AG04449 (cell line): ENCODE measurements at regions of chr22 and their contacts with region 1.

Region 1: GRCh38 chr22:35430897-35431322 is 31.0 kb downstream of the MCM5 start:
- DNase-seq: peak; percentile 68
- H3K4me3 ChIP-seq: no peak overlapping the region
- CTCF ChIP-seq: peak; percentile 93

Region 2: DNA sequence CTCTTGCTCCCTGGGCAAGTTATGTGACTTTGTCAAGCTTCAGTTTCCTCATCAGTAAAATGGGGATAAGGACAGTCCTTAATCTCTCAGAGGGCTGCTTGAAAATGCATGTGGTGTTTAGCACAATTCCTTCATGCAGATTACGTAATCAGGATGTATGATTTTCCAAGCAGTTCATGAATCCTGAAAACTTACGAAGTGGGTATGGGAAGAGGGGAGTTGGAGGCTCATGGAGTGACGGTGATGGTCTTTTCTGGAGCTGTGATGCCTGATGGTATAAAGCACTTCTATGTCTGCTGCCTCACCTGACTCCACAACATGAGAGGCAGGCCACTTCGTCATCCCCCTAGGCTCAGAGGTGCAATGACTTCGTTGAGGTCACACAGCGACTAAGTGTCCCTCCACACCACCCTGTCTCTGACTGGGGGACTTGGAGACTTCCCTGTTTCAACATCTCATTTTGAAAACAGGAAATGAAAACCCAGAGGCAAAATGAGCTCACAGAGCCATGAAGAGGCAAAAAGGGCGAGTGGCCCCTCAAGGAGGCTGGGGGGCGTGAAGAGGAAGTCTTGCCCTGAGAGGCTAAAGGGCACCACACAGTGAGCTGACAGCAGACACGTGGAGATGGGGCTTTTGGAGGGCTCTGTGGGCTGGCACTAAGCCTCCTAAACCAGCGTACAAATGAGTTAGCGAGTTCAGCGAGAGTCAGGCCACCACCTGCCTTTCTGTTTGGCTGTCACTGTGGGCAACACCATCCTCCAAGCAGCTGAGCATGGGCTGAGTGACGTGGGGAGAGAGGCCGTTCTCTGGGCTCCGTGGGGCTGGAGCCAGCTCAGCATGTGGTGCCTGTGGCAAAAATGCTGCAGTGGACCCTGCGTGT is 20.9 kb before region 1 on chr22:
- CTCF ChIA-PET with region 1: interaction called, 19 read pairs
- POLR2A ChIA-PET with region 1: no interaction called
- DNase-seq: no peak
- H3K4me3 ChIP-seq: no peak overlapping the region
- CTCF ChIP-seq: no peak

Region 3: DNA sequence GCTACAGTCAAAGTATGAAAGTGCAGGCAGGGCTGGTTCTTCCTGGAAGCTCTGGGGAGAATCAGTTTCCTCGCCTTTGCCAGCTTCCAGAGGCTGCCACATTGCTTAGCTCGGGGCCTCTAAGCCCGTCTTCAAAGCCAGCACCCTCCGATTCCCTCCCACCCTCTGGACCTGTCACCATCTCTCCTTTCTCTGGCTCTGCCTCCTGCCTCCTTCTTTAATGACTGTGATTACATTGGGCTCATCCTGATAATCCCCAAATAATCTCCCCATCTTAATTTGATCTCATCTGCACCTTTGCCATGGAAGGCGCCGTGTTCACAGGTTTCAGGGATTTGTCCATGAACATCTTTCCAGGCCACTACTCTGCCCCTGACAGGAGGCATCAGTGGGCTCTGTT is 11.6 kb after region 1 on chr22:
- CTCF ChIA-PET with region 1: interaction called, 10 read pairs
- POLR2A ChIA-PET with region 1: no interaction called
- DNase-seq: no peak
- H3K4me3 ChIP-seq: no peak overlapping the region
- CTCF ChIP-seq: no peak

Region 4: DNA sequence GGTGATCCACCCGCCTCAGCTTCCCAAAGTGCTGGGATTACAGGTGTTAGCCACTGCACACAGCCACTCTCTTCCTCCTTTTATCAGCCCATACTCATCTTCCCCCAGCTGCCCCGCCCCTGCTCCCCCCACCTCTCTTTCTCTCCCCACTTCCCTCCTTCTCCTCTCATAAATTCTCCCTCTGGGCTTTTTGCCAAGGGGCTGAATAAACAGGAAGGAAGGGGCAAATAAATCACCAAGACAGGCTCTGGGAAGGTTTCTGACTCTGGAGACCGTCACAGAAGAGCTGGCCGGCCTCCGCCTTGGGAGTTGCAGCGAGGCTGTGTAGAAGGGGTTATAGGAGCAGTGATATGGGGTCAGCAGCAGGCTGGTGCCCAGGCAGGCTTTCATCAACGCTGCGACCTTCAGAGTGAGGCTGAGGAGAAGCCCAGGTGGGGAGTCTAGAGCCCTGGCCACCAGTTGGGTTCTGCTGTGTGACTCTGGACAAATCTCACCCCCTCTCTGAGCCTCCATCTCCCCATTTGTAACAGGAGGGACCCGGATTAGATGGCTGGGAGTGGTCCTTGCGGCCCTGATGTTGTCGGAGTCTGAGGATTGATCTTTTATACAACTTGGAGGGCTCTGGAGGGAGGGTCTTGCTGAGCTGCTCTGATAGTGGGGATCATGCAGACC is 47.1 kb after region 1 on chr22:
- CTCF ChIA-PET with region 1: no interaction called
- POLR2A ChIA-PET with region 1: no interaction called
- DNase-seq: peak; percentile 24
- H3K4me3 ChIP-seq: no peak overlapping the region
- CTCF ChIP-seq: no peak

Region 5: GRCh38 chr22:35582861-35583670 is 152.2 kb after region 1 on chr22:
- CTCF ChIA-PET with region 1: interaction called, 352 read pairs
- POLR2A ChIA-PET with region 1: interaction called, 3 read pairs
- DNase-seq: no peak
- H3K4me3 ChIP-seq: no peak overlapping the region
- CTCF ChIP-seq: peak; percentile 88

Region 6: DNA sequence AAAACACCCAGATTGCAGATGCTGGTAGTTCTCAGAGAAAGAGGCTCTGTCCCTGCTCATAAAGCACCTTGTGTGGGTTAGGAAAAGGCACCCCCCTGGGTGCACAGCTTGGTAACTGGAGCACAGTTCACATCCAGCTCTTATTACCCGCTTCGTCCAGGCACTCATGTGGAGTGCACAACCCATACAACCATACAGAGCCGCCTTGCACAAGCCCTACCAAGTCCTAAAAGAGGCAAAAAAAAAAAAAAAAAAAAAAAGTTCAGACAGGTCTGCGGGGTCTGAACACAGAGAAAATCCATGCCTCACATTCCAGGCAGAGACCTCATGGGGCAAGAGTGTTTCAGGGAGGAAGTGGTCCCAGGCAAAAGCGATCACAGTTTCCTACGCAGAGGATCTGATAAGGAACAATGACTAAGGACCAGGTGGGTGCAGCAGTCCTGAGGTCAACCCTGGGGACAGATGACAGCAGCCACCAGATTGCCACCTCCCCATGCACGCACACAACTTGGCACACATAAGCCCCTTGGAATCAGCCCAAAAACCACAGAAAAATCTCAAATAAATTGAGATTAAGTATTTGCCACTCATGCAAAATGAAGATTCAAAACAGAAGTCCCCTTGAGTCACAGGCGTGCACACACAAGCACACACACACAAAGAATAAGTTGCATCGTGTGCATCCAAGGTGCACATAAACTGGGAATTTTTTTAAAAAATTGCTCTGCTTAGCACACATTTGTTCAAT is 173.9 kb after region 1 on chr22:
- CTCF ChIA-PET with region 1: interaction called, 10 read pairs
- POLR2A ChIA-PET with region 1: no interaction called
- DNase-seq: no peak
- H3K4me3 ChIP-seq: no peak overlapping the region
- CTCF ChIP-seq: no peak

Region 7: DNA sequence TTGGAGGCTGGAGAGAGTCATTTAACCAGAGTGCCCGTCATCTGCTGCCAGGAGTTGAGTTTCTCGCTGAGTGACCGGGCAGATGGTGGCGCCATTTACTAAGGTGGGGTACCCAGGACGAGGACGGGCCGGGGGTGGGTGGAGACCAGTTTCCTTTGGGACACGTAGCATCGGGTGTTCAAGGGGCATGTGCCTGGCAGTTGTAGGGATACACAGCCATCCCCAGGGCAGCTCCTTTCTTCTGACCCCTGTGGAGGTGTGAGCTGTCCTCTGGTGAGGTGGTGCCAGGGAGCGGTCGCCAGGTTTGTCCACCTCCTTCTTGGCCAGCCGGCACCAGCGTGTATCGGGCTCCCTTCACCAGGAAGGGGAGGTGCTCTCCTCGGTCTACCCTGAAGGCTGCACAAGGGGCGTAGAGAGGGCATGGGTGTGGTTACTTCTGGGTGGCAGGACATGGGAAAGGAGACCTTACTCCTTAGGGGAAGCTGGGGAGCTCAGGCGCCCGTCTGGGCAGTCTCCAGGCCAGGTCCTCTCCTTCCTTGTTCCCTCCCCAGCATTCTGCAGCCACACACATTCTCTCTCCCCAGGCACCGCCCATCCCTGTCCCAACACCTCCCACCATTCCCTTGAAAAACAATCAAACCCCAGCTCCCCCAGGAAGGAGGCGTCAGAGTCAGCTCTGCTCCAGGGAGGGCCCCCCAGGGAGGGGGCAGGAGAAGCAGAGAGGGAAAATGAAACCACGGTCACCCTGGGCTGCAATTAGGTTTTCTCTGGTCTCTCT is 196.5 kb after region 1 on chr22:
- CTCF ChIA-PET with region 1: interaction called, 50 read pairs
- POLR2A ChIA-PET with region 1: no interaction called
- DNase-seq: peak; percentile 76
- H3K4me3 ChIP-seq: peak overlapping the region; percentile 66
- CTCF ChIP-seq: peak; percentile 69